ENCODE measurements at regions of chr18 and their contacts with region 1.

Region 1: GRCh38 chr18:73990258-73990657 is 157.4 kb downstream of the FBXO15 start:
- DNase-seq: no peak
- ATAC-seq: no peak
- H3K4me3 ChIP-seq: no peak overlapping the region
- H3K27ac ChIP-seq: no peak overlapping the region
- H3K4me1 ChIP-seq: no peaks in the 10 kb centered on the region
- H3K27me3 ChIP-seq: no peaks in the 10 kb centered on the region

Region 2: GRCh38 chr18:72752220-72752619 is 1238.0 kb before region 1 on chr18:
- intact Hi-C with region 1: no loop called
- DNase-seq: no peak
- ATAC-seq: no peak
- H3K4me3 ChIP-seq: no peak overlapping the region
- H3K27ac ChIP-seq: no peak overlapping the region
- H3K4me1 ChIP-seq: no peaks in the 10 kb centered on the region
- H3K27me3 ChIP-seq: no peaks in the 10 kb centered on the region

Region 3: GRCh38 chr18:74050807-74051206 is 60.5 kb after region 1 on chr18:
- intact Hi-C with region 1: no loop called
- DNase-seq: no peak
- ATAC-seq: no peak
- H3K4me3 ChIP-seq: no peak overlapping the region
- H3K27ac ChIP-seq: no peak overlapping the region
- H3K4me1 ChIP-seq: no peaks in the 10 kb centered on the region
- H3K27me3 ChIP-seq: no peaks in the 10 kb centered on the region

Region 4: DNA sequence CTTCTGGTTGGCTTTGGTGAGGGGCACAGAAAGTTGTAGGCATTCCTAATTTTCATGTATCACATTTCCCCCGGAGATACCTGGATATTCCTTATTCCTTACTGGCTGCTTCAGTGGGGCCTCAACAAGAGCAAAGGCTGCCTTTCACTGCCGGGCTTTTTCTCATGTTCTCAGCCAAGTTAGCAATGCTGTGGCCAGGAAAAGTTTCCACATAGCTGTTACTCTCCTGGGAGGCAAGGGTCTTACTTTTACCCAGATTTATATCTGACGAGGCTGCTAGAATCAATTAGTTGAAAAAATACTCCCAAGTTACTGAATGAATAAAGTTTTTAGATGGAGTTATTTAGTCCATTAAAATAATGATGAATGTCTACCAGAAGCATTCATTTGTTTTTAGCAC is 837.9 kb after region 1 on chr18:
- intact Hi-C with region 1: loop called in 1 of 2 experiments (anchors 5 kb)
- DNase-seq: no peak
- ATAC-seq: no peak
- H3K4me3 ChIP-seq: no peak overlapping the region
- H3K27ac ChIP-seq: no peak overlapping the region
- H3K4me1 ChIP-seq: peaks cover 0 to 4% of the 10 kb centered on the region in 2 donors
- H3K27me3 ChIP-seq: no peaks in the 10 kb centered on the region

Measured in aorta (tissue), 5 donors.